ENCODE measurements at regions of chr1 and their contacts with region 1.

Region 1: DNA sequence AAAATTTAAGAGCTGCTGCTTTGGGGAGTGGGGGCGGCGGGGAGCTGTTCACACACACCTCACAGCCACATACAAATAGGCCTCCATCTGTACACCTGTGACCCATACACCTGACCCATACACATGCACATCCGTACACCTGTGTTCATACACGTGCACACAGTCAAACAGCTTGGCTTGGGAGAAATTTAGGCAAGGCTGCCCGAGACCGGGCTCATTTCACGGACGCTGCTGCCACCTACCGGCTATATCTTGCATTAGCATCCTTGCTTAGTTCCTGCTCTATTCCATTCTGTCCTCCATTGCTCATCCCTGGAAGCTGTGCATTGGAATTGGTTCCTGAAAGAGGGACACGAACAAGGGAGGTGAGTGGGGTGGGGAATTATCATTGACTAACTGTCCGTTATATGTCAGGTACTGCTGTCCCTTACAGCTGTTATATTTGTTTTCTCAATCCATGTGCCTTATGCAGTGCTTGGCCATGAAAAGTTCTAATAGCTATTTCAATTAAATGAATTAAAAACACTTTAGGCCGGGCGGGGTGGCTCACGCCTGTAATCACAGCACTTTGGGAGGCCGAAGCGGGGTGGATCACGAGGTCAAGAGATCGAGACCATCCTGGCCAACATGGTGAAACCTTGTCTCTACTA is 37.1 kb upstream of the EPB41 start:
- DNase-seq: no peak
- H3K4me3 ChIP-seq: no peak overlapping the region
- H3K27ac ChIP-seq: no peak overlapping the region
- H3K4me1 ChIP-seq: peaks cover 6% of the 10 kb centered on the region
- H3K27me3 ChIP-seq: no peaks in the 10 kb centered on the region
- CTCF ChIP-seq: peak; percentile 77 to 88 (median 79)
- POLR2A ChIP-seq: no peak

Region 2: DNA sequence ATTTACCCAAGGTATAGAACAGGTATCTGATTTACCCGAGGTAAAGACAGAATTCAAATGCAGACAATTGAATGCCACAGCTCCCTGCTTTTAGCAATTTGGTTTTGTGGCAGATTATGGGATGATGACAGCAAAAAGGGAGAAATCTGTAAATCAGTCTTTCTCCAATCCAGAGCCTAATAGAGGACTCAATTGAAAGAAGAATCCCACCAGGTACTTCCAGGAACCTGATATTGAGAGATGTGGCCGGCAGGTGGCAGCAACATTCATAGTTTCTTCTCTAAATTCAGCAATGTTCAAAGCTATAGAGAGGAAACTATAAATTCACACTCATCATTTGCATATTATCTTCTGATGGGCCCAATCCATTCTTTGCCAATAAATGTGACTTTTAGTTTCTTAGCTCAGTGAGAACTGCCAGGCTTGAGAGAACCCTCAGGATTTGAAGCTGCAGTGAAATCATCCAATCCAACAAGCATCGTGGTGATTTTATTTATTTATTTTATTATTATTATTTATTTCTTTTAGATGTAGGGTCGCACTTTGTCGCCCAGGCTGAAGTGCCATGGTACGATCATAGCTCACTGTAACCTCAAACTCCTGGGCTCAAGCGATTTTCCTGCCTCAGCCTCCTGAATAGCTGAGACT is 517.5 kb before region 1 on chr1:
- intact Hi-C with region 1: loop called (anchors 10 kb)
- DNase-seq: no peak
- H3K4me3 ChIP-seq: no peak overlapping the region
- H3K27ac ChIP-seq: no peak overlapping the region
- H3K4me1 ChIP-seq: no peaks in the 10 kb centered on the region
- H3K27me3 ChIP-seq: no peaks in the 10 kb centered on the region
- CTCF ChIP-seq: peak; percentile 44 to 64 (median 52)
- POLR2A ChIP-seq: no peak

Region 3: GRCh38 chr1:28369371-28370238 is 507.7 kb before region 1 on chr1 and contains the start of gene PHACTR4:
- intact Hi-C with region 1: loop called (anchors 5 kb)
- DNase-seq: peak in 1 of 2 donors; percentile 93
- H3K4me3 ChIP-seq: peak within 1 kb of the TSS; percentile 80 to 81
- H3K27ac ChIP-seq: peak within 1 kb of the TSS; percentile 95
- H3K4me1 ChIP-seq: peaks cover 44% of the 10 kb centered on the region
- H3K27me3 ChIP-seq: no peaks in the 10 kb centered on the region
- CTCF ChIP-seq: no peak
- POLR2A ChIP-seq: peak in 1 of 2 donors; percentile 47
- total RNA-seq, gene PHACTR4: 28.7 TPM

Region 4: DNA sequence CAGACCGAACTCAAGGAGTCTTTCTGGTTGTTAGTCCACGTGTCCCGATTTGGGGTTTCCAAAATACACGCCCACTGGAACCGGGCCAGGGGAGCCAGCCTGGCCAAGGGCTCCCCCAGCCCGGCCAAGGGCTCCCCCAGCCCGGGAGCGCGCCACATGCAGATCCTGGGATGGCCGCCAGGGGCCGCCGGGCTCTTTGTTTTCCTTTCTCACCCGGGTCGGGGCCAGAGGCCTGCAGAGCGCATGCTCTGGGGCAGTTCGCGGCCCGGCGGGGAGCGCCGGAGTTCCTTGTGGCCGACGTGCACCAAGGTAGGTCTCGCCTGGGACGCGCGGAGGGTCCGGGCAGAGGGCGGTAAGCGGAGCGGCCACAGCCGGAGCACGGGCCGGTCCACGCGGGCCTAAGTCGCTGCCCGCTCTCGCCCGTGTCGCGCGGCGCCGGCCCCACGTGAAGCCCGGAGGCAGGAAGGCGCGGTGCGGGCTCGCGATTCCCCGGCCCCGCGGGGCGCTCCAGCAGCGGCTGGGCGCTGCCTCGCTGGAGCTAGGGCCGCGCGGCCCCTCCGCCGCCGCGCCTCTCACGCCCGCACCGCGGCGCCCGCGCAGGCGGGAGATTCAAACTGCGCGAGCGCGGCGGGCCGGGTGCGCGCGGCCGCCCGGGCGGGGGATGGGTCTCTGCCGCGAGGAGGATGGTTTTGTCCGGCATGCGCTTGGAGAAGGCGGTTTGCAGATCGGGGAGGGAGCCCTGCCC is 359.1 kb before region 1 on chr1:
- intact Hi-C with region 1: loop called (anchors 10 kb)
- DNase-seq: peak in 1 of 2 donors; percentile 90
- H3K4me3 ChIP-seq: peak overlapping the region; percentile 51 to 81
- H3K27ac ChIP-seq: peak overlapping the region; percentile 75
- H3K4me1 ChIP-seq: peaks cover 21% of the 10 kb centered on the region
- H3K27me3 ChIP-seq: no peaks in the 10 kb centered on the region
- CTCF ChIP-seq: peak; percentile 91 to 100 (median 98)
- POLR2A ChIP-seq: no peak

Region 5: GRCh38 chr1:28581536-28582247 is 295.6 kb before region 1 on chr1:
- intact Hi-C with region 1: no loop called
- DNase-seq: peak in 1 of 2 donors; percentile 98
- H3K4me3 ChIP-seq: peak overlapping the region; percentile 94 to 99
- H3K27ac ChIP-seq: peak overlapping the region; percentile 92
- H3K4me1 ChIP-seq: peaks cover 37% of the 10 kb centered on the region
- H3K27me3 ChIP-seq: no peaks in the 10 kb centered on the region
- CTCF ChIP-seq: peak in 1 of 3 experiments; percentile 10
- POLR2A ChIP-seq: peak in 1 of 2 donors; percentile 72

Region 6: DNA sequence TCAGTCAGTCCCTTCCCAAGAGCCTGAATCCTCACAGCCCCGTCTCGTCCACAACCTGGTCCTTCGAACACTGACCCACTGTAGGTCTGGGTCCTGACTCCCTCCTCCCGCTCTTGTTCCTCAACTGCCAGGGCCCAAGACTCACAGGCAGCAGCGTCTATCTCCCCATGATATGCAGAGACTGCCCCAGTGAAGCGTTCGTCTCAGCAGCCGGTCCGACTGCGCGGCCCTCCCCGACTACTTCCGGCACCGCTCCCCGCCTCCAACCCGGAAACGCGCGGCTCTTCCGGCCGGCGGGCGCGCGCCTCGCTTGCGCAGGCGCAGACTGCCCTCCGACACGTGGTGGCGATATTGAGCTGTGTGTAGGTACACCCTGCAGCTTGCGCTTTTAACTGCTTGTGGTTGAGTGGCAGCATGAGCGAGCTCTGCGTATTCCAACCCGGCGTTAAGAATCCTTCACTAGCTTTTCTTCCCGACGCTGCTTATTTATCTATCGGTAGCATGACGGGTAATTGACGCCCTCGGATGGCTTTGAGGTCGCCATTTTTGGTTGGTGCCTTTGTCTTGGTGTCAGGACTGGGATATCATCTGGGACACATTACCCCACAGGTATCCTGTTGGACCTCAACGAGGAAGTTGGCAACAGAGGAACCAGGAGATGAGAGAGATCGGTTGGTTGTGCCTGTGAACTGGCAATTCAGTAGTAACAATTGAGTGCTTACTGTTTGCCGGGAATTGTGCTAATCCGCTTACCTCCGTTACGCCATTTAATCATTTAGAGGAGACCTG is 234.2 kb before region 1 on chr1 and contains the start of gene TAF12:
- intact Hi-C with region 1: loop called (anchors 10 kb)
- DNase-seq: peak; percentile 97
- H3K4me3 ChIP-seq: peak within 1 kb of the TSS; percentile 92
- H3K27ac ChIP-seq: peak within 1 kb of the TSS; percentile 90
- H3K4me1 ChIP-seq: peaks cover 53% of the 10 kb centered on the region
- H3K27me3 ChIP-seq: no peaks in the 10 kb centered on the region
- CTCF ChIP-seq: peak in 2 of 3 experiments; percentile 39 to 44
- POLR2A ChIP-seq: peak in 1 of 2 donors; percentile 84
- total RNA-seq, gene TAF12: 14.2 TPM

Region 7: GRCh38 chr1:28744184-28744583 is 133.1 kb before region 1 on chr1:
- intact Hi-C with region 1: no loop called
- DNase-seq: no peak
- H3K4me3 ChIP-seq: no peak overlapping the region
- H3K27ac ChIP-seq: no peak overlapping the region
- H3K4me1 ChIP-seq: peaks cover 96% of the 10 kb centered on the region
- H3K27me3 ChIP-seq: no peaks in the 10 kb centered on the region
- CTCF ChIP-seq: no peak
- POLR2A ChIP-seq: no peak

Region 8: DNA sequence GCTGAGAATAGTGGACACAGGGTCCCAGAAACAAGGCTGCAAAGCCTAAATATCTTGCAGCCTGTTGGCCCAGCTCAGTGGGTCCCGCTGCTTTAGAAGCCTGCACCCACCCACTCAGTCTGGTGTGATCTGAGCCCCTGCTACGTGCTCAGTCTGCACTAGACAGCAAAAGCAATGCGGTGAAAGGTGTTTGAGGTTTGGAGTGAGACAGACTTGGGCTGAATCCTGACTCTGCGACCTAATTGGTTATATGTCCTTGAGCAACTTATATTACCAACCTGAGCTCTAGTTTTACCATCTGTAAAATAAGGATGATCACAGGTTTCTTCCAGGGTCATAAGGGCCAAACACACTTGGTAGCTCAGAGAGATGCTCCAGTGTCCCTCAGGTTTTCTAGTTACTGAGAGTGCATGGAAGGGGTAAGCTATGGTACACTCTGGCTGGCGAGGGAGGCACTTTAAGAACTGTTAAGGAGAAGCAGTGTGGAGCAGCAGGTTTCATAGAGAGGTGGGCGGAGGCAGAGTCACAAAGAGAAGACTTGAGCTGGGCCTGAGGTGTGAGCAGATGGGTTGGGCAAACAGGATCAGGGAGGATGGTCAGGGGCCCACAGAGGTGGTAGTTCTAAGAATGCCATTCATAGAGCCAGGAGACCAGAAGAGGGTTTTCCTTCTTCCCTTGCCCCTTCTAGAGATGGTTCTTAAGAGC is 236.3 kb after region 1 on chr1:
- intact Hi-C with region 1: no loop called
- DNase-seq: no peak
- H3K4me3 ChIP-seq: no peak overlapping the region
- H3K27ac ChIP-seq: no peak overlapping the region
- H3K4me1 ChIP-seq: peaks cover 6% of the 10 kb centered on the region
- H3K27me3 ChIP-seq: no peaks in the 10 kb centered on the region
- CTCF ChIP-seq: no peak
- POLR2A ChIP-seq: no peak

Measured in vagina (tissue), 2 donors.